ENCODE measurements at regions of chr12 and their contacts with region 1.

Region 1: GRCh38 chr12:5988659-5989116 is 43.6 kb upstream of the ANO2 start:
- DNase-seq: peak; percentile 77 to 85 (median 79)
- ATAC-seq: peak; percentile 87
- H3K4me3 ChIP-seq: no peak overlapping the region
- H3K27ac ChIP-seq: no peak overlapping the region
- H3K4me1 ChIP-seq: no peaks in the 10 kb centered on the region
- H3K27me3 ChIP-seq: no peaks in the 10 kb centered on the region
- CTCF ChIP-seq: peak; percentile 89 to 96 (median 94)
- POLR2A ChIP-seq: no peak

Region 2: GRCh38 chr12:5889381-5890047 is 99.2 kb before region 1 on chr12:
- intact Hi-C with region 1: no loop called
- DNase-seq: no peak
- ATAC-seq: no peak
- H3K4me3 ChIP-seq: no peak overlapping the region
- H3K27ac ChIP-seq: no peak overlapping the region
- H3K4me1 ChIP-seq: no peaks in the 10 kb centered on the region
- H3K27me3 ChIP-seq: no peaks in the 10 kb centered on the region
- CTCF ChIP-seq: no peak
- POLR2A ChIP-seq: no peak

Region 3: DNA sequence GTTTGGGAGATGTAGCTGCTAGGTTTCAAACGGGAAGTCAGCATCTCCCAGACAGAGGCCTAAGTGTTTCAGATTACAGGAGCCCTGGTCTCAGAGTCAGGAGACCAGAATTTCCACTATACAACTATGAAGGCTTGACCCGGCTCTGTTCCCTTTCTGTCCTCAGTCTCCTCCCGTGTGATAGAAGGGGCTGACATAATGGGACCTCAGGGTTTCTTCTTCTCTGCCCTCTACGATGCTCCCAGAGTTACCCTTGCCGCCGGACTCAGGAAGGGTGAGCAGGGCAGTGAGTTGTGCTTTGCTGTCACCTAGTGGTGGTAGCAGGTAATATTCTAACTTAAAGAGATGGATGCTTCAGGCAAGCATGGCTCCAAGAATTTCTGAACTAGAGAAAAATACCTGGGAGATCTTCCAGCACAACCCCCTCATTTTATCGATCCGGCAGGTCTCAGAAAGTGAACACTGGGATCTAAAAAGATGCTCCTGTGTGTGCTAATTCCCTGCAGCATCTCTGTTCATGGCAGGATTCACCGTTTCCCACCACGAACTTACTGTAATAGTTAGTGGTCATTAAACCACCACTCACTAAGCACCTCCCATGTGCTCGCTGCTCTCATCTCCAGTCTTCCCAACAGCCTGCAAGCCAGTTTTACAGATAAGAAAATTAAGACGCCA is 51.3 kb after region 1 on chr12:
- intact Hi-C with region 1: loop called (anchors 5 kb)
- DNase-seq: peak; percentile 51 to 62 (median 56)
- ATAC-seq: peak; percentile 85
- H3K4me3 ChIP-seq: no peak overlapping the region
- H3K27ac ChIP-seq: no peak overlapping the region
- H3K4me1 ChIP-seq: no peaks in the 10 kb centered on the region
- H3K27me3 ChIP-seq: peaks cover 0 to 4% of the 10 kb centered on the region in 2 donors
- CTCF ChIP-seq: peak; percentile 73 to 90 (median 88)
- POLR2A ChIP-seq: no peak

Region 4: DNA sequence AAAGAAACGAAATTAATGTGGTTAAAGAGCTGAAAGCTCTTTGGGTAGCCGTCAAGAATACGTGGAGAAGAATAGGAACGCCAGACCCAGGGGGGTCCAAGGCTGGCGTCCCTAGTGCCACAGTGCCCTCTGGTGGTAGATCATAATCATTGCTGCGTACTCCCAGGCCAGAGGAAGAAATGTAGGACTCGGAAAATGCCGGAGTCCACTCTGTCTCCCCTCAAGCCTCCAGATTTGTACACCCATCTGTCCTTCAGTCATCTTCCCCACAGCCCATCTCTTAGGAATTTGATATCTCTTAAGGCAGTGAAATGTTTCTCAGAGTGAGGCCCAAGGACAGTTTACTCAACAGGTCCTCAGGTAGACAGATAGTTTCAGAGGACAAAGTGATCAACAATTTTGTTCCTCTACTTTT is 296.4 kb after region 1 on chr12:
- intact Hi-C with region 1: loop called (anchors 5 kb)
- DNase-seq: peak; percentile 64 to 68 (median 66)
- ATAC-seq: peak; percentile 78
- H3K4me3 ChIP-seq: no peak overlapping the region
- H3K27ac ChIP-seq: no peak overlapping the region
- H3K4me1 ChIP-seq: peaks cover 12% of the 10 kb centered on the region
- H3K27me3 ChIP-seq: no peaks in the 10 kb centered on the region
- CTCF ChIP-seq: peak; percentile 81 to 96 (median 93)
- POLR2A ChIP-seq: no peak